Activated CD4-positive, alpha-beta T cell treated with anti-CD3 and anti-CD28 coated beads, Interleukin-2, amount 10 ng/mL, durations not matched to agents 24 days and 14 days (primary cell): ENCODE measurements at regions of chr12 and their contacts with region 1.

Region 1: GRCh38 chr12:51823875-51824565 is 24.5 kb downstream of the FIGNL2 start:
- DNase-seq: peak; percentile 72
- H3K4me3 Mint-ChIP-seq: no peak overlapping the region
- H3K27ac Mint-ChIP-seq: no peak overlapping the region
- H3K4me1 Mint-ChIP-seq: peaks cover 26% of the 10 kb centered on the region
- H3K27me3 Mint-ChIP-seq: peaks cover 10% of the 10 kb centered on the region

Region 2: GRCh38 chr12:51590347-51591019 is 233.5 kb before region 1 on chr12:
- intact Hi-C with region 1: loop called (anchors 2 kb)
- DNase-seq: peak; percentile 93
- H3K4me3 Mint-ChIP-seq: peak overlapping the region; percentile 87
- H3K27ac Mint-ChIP-seq: peak overlapping the region; percentile 83
- H3K4me1 Mint-ChIP-seq: peaks cover 17% of the 10 kb centered on the region
- H3K27me3 Mint-ChIP-seq: peaks cover 66% of the 10 kb centered on the region

Region 3: GRCh38 chr12:51871126-51871525 is 47.1 kb after region 1 on chr12:
- intact Hi-C with region 1: loop called (anchors 10 kb)
- DNase-seq: no peak
- H3K4me3 Mint-ChIP-seq: no peak overlapping the region
- H3K27ac Mint-ChIP-seq: no peak overlapping the region
- H3K4me1 Mint-ChIP-seq: peaks cover 8% of the 10 kb centered on the region
- H3K27me3 Mint-ChIP-seq: peaks cover 47% of the 10 kb centered on the region

Region 4: DNA sequence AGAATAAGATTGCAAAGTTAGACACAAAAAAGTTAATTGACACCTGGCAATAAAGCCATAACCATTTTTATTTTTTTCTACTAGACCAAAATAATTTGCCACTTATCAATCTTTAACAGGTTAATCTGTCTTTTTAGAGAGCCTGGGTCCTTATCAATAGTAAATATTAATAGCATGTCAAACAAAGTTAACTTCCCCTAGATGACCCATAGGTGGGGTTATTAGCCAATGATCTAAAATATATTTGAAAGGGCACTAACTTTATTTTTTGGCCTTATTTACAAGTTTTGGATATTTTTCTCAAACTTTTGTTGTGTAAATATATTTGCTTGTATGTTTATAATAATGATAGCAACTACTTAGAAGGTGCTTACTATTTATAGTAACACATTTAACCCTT is 67.8 kb after region 1 on chr12:
- intact Hi-C with region 1: no loop called
- DNase-seq: no peak
- H3K4me3 Mint-ChIP-seq: no peak overlapping the region
- H3K27ac Mint-ChIP-seq: no peak overlapping the region
- H3K4me1 Mint-ChIP-seq: peaks cover 4% of the 10 kb centered on the region
- H3K27me3 Mint-ChIP-seq: peaks cover 10% of the 10 kb centered on the region